Heart left ventricle (tissue), 16 donors: ENCODE measurements at regions of chr14 and their contacts with region 1.

Region 1: DNA sequence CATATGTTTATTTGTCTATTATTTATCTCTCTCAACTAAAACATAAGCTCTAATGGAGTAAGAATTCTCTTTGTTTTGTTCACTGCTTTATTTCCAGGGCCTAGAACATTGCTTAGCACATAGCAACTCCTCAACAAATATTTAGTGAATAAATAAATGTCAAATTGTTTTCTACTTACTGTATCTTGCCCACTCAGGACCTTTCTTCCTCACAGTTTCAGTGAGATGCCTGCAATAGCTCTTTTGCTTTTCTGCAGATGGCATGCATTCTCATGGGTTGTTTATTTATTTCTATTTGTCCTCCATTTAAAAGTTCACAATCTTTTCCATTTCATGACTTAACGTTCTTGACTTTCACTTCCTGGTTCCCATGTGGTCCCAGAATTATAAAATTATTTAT is 94.9 kb upstream of the TTC7B start:
- DNase-seq: no peak
- ATAC-seq: no peak
- H3K4me3 ChIP-seq: no peak overlapping the region
- H3K27ac ChIP-seq: peak overlapping the region in 1 of 12 donors; percentile 27
- H3K4me1 ChIP-seq: no peaks in the 10 kb centered on the region
- H3K27me3 ChIP-seq: no peaks in the 10 kb centered on the region
- CTCF ChIP-seq: no peak
- POLR2A ChIP-seq: no peak

Region 2: GRCh38 chr14:91047174-91047753 is 136.1 kb after region 1 on chr14:
- intact Hi-C with region 1: loop called in 2 of 10 experiments (anchors 10 kb)
- DNase-seq: no peak
- ATAC-seq: no peak
- H3K4me3 ChIP-seq: no peak overlapping the region
- H3K27ac ChIP-seq: no peak overlapping the region
- H3K4me1 ChIP-seq: peaks cover 0 to 5% (median 0%) of the 10 kb centered on the region in 12 donors
- H3K27me3 ChIP-seq: no peaks in the 10 kb centered on the region
- CTCF ChIP-seq: no peak
- POLR2A ChIP-seq: no peak